Body of pancreas (tissue), 4 donors: ENCODE measurements at regions of chr12 and their contacts with region 1.

Region 1: GRCh38 chr12:53743266-53744129 is 8.3 kb downstream of the CISTR start:
- DNase-seq: peak; percentile 49 to 62 (median 54)
- ATAC-seq: peak; percentile 62
- H3K4me3 ChIP-seq: no peak overlapping the region
- H3K27ac ChIP-seq: no peak overlapping the region
- H3K4me1 ChIP-seq: peaks cover 21% of the 10 kb centered on the region
- H3K27me3 ChIP-seq: peaks cover 0 to 18% of the 10 kb centered on the region in 2 donors
- CTCF ChIP-seq: peak; percentile 81 to 97 (median 88)
- POLR2A ChIP-seq: no peak

Region 2: GRCh38 chr12:52561880-52562449 is 1181.5 kb before region 1 on chr12:
- intact Hi-C with region 1: no loop called
- DNase-seq: no peak
- ATAC-seq: no peak
- H3K4me3 ChIP-seq: no peak overlapping the region
- H3K27ac ChIP-seq: no peak overlapping the region
- H3K4me1 ChIP-seq: no peaks in the 10 kb centered on the region
- H3K27me3 ChIP-seq: no peaks in the 10 kb centered on the region
- CTCF ChIP-seq: peak in 2 of 7 experiments; percentile 23
- POLR2A ChIP-seq: no peak

Region 3: DNA sequence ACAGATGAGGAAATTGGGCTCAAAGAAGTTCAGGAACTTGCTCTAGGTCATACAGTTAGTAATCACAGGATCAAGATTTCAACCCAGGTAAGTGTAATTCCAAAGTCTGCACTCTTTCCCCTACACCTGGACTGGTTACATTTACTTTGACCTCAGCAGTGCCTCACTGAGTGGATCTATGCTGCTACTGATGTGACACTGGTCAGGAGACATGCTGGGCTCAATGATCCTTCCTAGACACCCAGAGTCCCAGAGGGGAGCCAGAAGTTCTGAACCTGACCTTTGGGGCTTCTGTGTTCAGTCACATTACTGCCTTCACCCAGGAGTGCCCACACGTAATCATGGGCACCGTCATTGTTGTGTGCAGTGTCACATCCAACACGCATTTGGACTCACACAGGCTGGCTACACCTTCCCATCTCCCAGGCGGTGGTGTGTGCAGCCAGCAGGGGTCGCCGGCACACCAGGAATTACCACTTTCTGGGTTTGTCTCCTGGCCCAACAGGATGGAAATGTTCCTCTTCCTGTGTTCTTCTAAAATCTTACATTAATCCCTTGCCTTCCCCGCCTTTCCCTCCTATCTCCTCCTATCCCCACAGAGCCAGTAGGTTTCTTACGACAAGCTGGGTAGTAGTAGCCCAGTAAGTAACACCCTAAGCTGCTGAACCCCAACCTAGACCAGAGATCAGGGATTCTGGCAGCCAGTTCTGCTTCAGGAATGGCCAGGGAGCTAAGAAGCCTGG is 41.8 kb before region 1 on chr12:
- intact Hi-C with region 1: loop called (anchors 5 kb)
- DNase-seq: peak; percentile 80 to 87 (median 84)
- ATAC-seq: peak; percentile 96
- H3K4me3 ChIP-seq: no peak overlapping the region
- H3K27ac ChIP-seq: no peak overlapping the region
- H3K4me1 ChIP-seq: peaks cover 3% of the 10 kb centered on the region
- H3K27me3 ChIP-seq: peaks cover 0 to 13% of the 10 kb centered on the region in 2 donors
- CTCF ChIP-seq: peak; percentile 80 to 97 (median 94)
- POLR2A ChIP-seq: no peak

Region 4: GRCh38 chr12:53961025-53961761 is 217.7 kb after region 1 on chr12:
- intact Hi-C with region 1: no loop called
- DNase-seq: no peak
- ATAC-seq: no peak
- H3K4me3 ChIP-seq: no peak overlapping the region
- H3K27ac ChIP-seq: no peak overlapping the region
- H3K4me1 ChIP-seq: peaks cover 14% of the 10 kb centered on the region
- H3K27me3 ChIP-seq: peaks cover 0 to 78% of the 10 kb centered on the region in 2 donors
- CTCF ChIP-seq: no peak
- POLR2A ChIP-seq: no peak